ENCODE measurements at regions of chr4 and their contacts with region 1.

Region 1: DNA sequence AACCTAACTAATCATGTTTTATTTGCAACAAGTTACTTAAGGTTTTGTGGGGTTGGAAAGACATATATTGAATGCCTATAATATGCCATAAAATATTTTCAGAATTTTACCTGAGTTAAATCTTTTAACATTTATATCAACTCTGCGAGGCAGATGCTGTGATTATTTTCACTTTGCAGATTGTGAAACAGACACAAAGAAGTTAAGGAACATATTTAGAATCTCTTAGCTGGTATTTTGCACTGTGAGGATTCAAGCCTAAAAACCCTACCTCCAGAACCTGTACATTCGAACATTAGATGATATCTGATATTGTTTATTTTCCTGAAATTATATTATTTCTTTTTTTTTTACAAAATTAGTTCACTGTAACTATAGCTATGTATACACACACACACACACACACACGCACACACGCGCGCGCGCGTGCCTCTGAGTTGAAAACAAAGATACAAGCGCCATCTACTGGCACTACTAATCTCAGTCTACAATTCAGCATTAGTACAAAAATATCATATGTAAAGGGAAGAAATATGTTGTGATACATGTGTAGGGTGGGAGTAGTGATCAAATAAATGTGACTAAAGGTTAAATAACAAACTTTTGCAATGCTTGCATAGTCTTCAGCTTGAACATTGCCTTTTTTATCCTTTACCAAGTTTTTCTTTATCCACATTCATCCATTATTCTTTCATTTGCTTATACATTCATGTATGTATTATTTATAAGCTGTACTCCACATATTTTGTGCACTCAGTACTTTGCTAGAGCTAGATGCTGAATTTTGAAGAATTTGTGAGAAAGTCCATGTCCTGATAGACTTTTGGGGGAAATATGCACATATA is 61.5 kb downstream of the ANXA10 start:
- DNase-seq: peak; percentile 58
- ATAC-seq: peak; percentile 82
- H3K4me3 Mint-ChIP-seq: no peak overlapping the region
- H3K27ac Mint-ChIP-seq: no peak overlapping the region
- H3K4me1 Mint-ChIP-seq: peaks cover 5% of the 10 kb centered on the region
- H3K27me3 Mint-ChIP-seq: peaks cover 2% of the 10 kb centered on the region

Region 2: DNA sequence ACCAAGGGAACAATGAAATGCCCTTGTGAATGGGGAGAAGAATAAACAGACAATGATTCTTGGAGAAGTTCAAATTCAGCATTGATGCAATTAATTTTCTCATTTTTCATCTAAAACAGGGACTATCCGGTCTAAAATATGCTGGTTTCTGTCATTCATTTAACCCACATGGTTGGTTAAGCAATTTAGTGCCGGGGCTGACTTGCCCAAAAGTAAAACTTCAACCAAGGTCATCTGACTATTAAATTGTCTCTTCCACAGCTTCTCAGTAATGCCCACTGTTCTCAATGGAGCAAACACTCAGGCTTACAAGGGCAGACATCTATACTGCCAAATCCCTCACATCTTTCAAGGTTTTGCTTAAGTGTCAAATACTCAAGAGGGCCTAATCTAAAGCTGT is 10.2 kb before region 1 on chr4:
- CTCF ChIA-PET with region 1: interaction called, 14 read pairs
- DNase-seq: no peak
- ATAC-seq: no peak
- H3K4me3 Mint-ChIP-seq: no peak overlapping the region
- H3K27ac Mint-ChIP-seq: no peak overlapping the region
- H3K4me1 Mint-ChIP-seq: no peaks in the 10 kb centered on the region
- H3K27me3 Mint-ChIP-seq: no peaks in the 10 kb centered on the region

Region 3: GRCh38 chr4:168174308-168174707 is 20.5 kb after region 1 on chr4:
- CTCF ChIA-PET with region 1: no interaction called
- DNase-seq: no peak
- ATAC-seq: no peak
- H3K4me3 Mint-ChIP-seq: no peak overlapping the region
- H3K27ac Mint-ChIP-seq: no peak overlapping the region
- H3K4me1 Mint-ChIP-seq: no peaks in the 10 kb centered on the region
- H3K27me3 Mint-ChIP-seq: no peaks in the 10 kb centered on the region

Region 4: GRCh38 chr4:168240821-168241220 is 87.0 kb after region 1 on chr4:
- CTCF ChIA-PET with region 1: no interaction called
- DNase-seq: no peak
- ATAC-seq: no peak
- H3K4me3 Mint-ChIP-seq: no peak overlapping the region
- H3K27ac Mint-ChIP-seq: no peak overlapping the region
- H3K4me1 Mint-ChIP-seq: peaks cover 14% of the 10 kb centered on the region
- H3K27me3 Mint-ChIP-seq: no peaks in the 10 kb centered on the region